ENCODE measurements at regions of chr6 and their contacts with region 1.

Region 1: GRCh38 chr6:108074359-108075144 is at the start of gene OSTM1:
- DNase-seq: peak; percentile 82
- ATAC-seq: peak; percentile 99
- H3K4me3 ChIP-seq: peak within 1 kb of the TSS; percentile 93
- H3K27ac ChIP-seq: peak within 1 kb of the TSS; percentile 58
- H3K4me1 ChIP-seq: peaks cover 2% of the 10 kb centered on the region; the same call in 1 of the 2 replicates
- H3K27me3 ChIP-seq: no peaks in the 10 kb centered on the region
- CTCF ChIP-seq: no peak
- POLR2A ChIP-seq: peak; percentile 59; the same call in 1 of the 2 replicates
- RAD21 ChIP-seq: no peak
- total RNA-seq, gene OSTM1: 17.5 and 24.7 TPM in 2 replicates

Region 2: DNA sequence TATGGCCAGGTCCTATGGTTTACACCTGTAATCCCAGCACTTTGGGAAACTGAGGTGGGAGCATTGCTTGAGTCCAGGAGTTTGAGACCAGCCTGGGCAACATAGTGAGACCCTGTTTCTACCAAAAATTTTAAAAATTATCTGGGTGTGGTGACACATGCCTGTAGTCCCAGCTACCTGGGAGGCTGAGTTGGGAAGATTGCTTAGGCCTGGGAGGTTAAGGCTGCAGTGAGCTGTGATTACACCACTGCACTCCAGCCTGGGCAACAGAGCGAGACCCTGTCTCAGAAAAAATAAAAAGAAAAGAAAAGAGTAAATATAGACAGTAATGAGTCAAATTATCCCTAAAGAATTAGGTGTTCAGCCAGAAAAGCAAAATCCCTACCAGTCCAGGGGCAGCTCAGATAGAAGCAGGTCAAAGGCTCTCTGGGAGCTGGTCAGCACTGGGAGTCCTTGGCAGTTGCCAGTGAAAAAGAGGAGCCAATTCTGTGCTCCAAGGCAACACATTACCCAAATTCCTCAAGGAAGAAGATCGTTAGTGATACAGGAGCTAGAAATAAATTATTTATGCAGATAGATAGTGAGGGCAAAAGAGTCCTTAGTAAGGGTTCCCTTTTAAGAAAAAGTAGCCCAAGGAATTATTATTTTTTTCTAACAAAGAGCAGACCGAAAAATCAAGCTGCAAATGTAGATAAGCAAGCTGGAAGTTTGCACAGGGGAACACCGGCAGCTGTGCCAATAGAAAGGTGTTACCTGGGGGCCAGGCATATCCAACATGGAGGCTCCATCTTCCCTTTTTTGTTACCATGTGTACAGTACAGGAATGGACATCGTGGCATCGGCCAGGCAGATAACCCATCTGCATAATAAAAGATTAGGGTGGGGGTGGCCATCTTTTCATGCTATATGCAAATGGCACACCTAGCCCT is 85.1 kb before region 1 on chr6:
- CTCF ChIA-PET with region 1: no interaction called
- POLR2A ChIA-PET with region 1: no interaction called
- dilution Hi-C with region 1: no loop called
- in situ Hi-C with region 1: no loop called
- intact Hi-C with region 1: no loop called
- DNase-seq: no peak
- ATAC-seq: no peak
- H3K4me3 ChIP-seq: no peak overlapping the region
- H3K27ac ChIP-seq: no peak overlapping the region
- H3K4me1 ChIP-seq: no peaks in the 10 kb centered on the region
- H3K27me3 ChIP-seq: peaks cover 2% of the 10 kb centered on the region
- CTCF ChIP-seq: no peak
- POLR2A ChIP-seq: no peak
- RAD21 ChIP-seq: no peak

Region 3: DNA sequence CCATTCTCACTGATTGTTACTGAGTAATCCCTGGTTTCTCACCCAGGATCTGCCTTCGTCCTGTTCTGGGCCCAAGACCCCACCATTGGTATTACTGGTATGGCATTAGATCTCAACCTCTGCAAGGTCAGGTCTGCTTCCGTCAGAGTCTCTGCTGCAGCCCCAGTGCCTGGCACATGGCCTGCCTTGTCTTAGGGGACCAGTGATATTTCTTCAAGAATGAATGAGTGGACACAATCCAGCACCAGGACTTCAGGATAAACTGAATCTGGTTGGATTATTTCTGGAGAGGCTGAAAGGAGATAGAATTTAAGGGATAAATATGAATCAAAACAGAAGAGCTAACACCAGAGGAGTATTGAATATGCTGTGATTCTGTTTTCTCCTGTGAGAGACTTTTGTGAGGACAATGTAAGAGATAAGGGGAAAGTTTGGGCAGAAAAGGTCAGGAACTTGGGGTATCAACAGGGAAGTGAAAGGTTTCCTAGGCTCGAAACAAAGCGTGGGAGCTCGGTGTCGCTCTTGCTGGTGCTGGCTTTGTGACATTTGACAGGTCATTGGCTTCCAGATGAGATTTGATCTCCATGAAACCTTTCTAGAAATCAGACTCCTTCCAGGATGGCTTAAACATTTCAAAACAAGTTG is 54.0 kb before region 1 on chr6:
- CTCF ChIA-PET with region 1: no interaction called
- POLR2A ChIA-PET with region 1: interaction called, 18 read pairs
- dilution Hi-C with region 1: no loop called
- in situ Hi-C with region 1: no loop called
- intact Hi-C with region 1: no loop called
- DNase-seq: no peak
- ATAC-seq: no peak
- H3K4me3 ChIP-seq: no peak overlapping the region
- H3K27ac ChIP-seq: no peak overlapping the region
- H3K4me1 ChIP-seq: no peaks in the 10 kb centered on the region
- H3K27me3 ChIP-seq: peaks cover under 1% of the 10 kb centered on the region; the same call in 1 of the 2 replicates
- CTCF ChIP-seq: no peak
- POLR2A ChIP-seq: no peak
- RAD21 ChIP-seq: no peak

Region 4: DNA sequence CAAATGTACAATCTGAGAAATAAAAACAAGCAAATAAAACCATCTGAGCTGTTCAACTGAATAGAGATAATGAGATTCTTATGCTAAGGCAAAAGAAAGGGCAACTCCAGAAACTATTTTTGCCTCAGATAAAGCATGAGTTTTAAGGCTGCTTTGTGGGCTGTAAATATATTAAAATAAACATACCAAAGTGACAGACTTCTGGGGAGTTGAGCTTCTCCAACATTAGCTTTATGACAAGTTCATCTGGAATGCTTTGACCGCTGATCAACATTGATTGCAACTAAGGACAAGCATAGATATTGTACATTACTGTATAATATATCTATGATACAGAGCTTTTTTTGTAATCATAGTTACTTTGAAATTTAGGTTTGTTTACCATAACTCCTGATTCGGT is 1597.2 kb after region 1 on chr6:
- CTCF ChIA-PET with region 1: no interaction called
- POLR2A ChIA-PET with region 1: no interaction called
- dilution Hi-C with region 1: no loop called
- in situ Hi-C with region 1: no loop called
- intact Hi-C with region 1: no loop called
- DNase-seq: peak; percentile 59
- ATAC-seq: peak; percentile 78
- H3K4me3 ChIP-seq: no peak overlapping the region
- H3K27ac ChIP-seq: no peak overlapping the region
- H3K4me1 ChIP-seq: peaks cover 3% of the 10 kb centered on the region
- H3K27me3 ChIP-seq: no peaks in the 10 kb centered on the region
- CTCF ChIP-seq: no peak
- POLR2A ChIP-seq: no peak
- RAD21 ChIP-seq: no peak